Activated T-helper 2 cell treated with anti-CD3 and anti-CD28 coated beads, Interferon-gamma antibody, Interleukin-2, Interleukin-4, amounts not matched to agents 10 μg/mL and 5 μg/mL and 100 μg/mL, durations not matched to agents 14 hours and 24 hours and 36 hours (primary cell): ENCODE measurements at regions of chr7 and their contacts with region 1.

Region 1: GRCh38 chr7:151519765-151520418 is at the start of gene RHEB:
- DNase-seq: peak; percentile 97
- H3K4me3 Mint-ChIP-seq: peak within 1 kb of the TSS; percentile 96
- H3K27ac Mint-ChIP-seq: peak within 1 kb of the TSS; percentile 96
- H3K4me1 Mint-ChIP-seq: peaks cover 31% of the 10 kb centered on the region
- H3K27me3 Mint-ChIP-seq: peaks cover 2% of the 10 kb centered on the region
- total RNA-seq, gene RHEB: 52.8 and 60.5 TPM in 2 replicates

Region 2: DNA sequence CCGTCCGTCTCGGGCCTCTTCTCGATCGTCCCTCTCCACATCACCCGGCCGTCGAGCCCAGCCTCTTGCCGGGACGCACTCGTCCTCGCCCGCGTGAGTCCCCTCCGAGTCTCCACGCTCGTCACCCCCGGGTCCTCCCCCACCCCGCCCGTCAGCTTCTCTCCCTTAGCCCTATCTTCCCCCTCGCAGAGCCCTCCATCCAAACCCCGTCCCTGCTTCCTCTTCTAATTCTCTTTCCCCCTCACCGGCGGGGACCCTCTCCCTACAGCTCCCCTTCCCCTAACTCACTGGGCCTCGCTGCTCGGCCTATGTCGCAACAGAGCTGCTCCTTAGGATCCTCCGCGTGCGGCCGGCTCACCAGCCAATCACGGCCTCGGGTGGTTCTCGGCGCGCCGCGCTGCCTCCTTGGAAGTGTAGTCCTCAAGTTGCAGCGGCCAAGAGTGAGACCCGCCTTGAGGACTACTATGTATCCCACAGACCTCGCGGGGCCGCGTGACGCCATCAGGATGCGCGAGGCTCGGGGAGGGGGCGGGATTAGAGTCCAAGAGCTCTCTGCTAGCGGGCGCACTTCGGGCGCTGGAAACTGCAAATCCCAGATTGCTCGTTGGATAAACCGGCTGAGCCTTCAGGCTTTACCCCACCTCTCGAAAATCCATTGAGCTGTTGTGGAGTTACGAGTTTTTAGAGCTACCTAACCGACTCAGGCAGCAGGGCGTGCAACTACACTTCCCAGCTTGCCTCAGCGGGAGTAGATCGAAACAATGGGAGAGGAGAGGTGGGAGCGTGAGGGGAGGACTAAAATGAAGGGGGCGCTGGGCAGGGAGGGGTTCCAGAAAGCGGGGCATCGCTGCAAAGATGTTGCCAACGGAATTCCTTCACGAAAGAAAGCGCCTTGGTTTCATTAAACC is 292.8 kb before region 1 on chr7 and contains the start of gene ABCF2:
- intact Hi-C with region 1: loop called (anchors 5 kb)
- DNase-seq: peak; percentile 95
- H3K4me3 Mint-ChIP-seq: peak within 1 kb of the TSS; percentile 99
- H3K27ac Mint-ChIP-seq: peak within 1 kb of the TSS; percentile 90
- H3K4me1 Mint-ChIP-seq: peaks cover 27% of the 10 kb centered on the region
- H3K27me3 Mint-ChIP-seq: peaks cover 4% of the 10 kb centered on the region
- total RNA-seq, gene ABCF2: 63.4 and 69.2 TPM in 2 replicates

Region 3: GRCh38 chr7:151484971-151485707 is 34.8 kb before region 1 on chr7:
- intact Hi-C with region 1: loop called (anchors 5 kb)
- DNase-seq: no peak
- H3K4me3 Mint-ChIP-seq: no peak overlapping the region
- H3K27ac Mint-ChIP-seq: peak overlapping the region; percentile 38
- H3K4me1 Mint-ChIP-seq: peaks cover 40% of the 10 kb centered on the region
- H3K27me3 Mint-ChIP-seq: no peaks in the 10 kb centered on the region

Region 4: DNA sequence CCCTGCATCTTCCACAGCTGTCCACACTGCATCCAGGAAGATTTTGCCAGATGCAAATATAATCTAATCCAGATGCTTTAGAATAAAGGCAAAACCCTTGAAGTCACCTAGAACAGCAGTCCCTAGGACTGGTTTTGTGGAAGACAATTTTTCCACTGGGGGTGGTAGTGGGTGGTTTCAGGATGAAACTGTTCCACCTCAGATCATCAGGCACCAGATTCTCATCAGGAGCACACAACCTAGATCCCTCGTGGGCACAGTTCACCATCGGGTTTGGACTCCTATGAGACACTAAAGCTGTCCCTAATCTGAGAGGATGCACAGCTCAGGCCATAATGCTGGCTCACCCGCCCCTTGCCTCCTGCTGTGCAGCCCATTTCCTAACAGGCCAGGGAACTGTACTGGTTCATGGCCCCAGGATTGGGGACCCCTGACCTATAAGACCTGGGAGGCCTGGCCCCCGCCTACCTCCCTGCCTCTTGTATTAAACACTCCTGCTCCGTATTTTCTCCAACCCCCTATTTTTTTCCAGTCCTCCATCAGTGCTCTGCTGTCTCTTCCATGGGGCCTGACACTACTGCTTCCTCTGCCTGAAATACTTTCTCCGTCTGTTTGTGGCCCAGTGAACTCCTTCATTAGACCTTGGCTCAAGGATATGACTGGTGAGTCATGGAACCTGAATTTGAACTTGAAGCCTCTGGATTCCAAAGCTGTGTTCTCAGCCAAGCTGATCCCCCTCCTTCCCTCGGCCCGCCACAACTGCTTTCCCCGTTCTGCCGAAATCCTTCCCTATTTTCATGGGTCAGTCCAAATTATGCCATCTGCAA is 79.7 kb after region 1 on chr7:
- intact Hi-C with region 1: no loop called
- DNase-seq: no peak
- H3K4me3 Mint-ChIP-seq: no peak overlapping the region
- H3K27ac Mint-ChIP-seq: no peak overlapping the region
- H3K4me1 Mint-ChIP-seq: peaks cover 8% of the 10 kb centered on the region
- H3K27me3 Mint-ChIP-seq: no peaks in the 10 kb centered on the region

Region 5: GRCh38 chr7:151759591-151760042 is 239.7 kb after region 1 on chr7:
- intact Hi-C with region 1: loop called (anchors 5 kb)
- DNase-seq: peak; percentile 28
- H3K4me3 Mint-ChIP-seq: no peak overlapping the region
- H3K27ac Mint-ChIP-seq: no peak overlapping the region
- H3K4me1 Mint-ChIP-seq: peaks cover 15% of the 10 kb centered on the region
- H3K27me3 Mint-ChIP-seq: peaks cover 2% of the 10 kb centered on the region

Region 6: GRCh38 chr7:152675759-152676636 is 1156.1 kb after region 1 on chr7 and contains the start of gene XRCC2:
- intact Hi-C with region 1: loop called (anchors 10 kb)
- DNase-seq: peak; percentile 94
- H3K4me3 Mint-ChIP-seq: peak within 1 kb of the TSS; percentile 93
- H3K27ac Mint-ChIP-seq: peak within 1 kb of the TSS; percentile 92
- H3K4me1 Mint-ChIP-seq: peaks cover 16% of the 10 kb centered on the region
- H3K27me3 Mint-ChIP-seq: no peaks in the 10 kb centered on the region
- total RNA-seq, gene XRCC2: 21.8 and 22.2 TPM in 2 replicates